CD4-positive, alpha-beta memory T cell (primary cell): ENCODE measurements at regions of chr20 and their contacts with region 1.

Region 1: DNA sequence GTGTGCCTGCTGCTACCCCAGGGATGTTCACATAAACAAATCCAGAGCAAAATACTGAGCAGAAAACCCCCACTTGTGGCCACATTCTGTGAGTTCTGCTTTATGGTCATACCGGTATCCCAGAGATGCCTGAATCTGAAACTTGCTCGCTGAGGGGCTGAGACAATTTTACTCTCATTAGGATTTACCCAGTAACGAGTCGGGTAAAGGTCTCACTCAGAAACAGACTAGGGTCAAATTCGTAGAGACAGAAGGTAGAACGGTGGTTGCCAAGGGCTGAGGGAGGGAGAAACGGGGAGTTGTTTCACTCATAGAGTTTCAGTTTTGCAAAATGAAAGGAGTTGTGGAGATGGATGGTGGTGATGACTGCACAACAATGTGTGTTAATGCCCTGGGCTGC is 45.4 kb upstream of the NKX2-2 start:
- DNase-seq: peak in 1 of 5 donors; percentile 24
- H3K4me3 ChIP-seq: no peak overlapping the region
- H3K4me3 Mint-ChIP-seq: peak overlapping the region; percentile 70 to 89 (median 82)
- H3K27ac ChIP-seq: no peak overlapping the region
- H3K27ac Mint-ChIP-seq: peak overlapping the region; percentile 33 to 91 (median 79)
- H3K4me1 ChIP-seq: peaks cover 55% of the 10 kb centered on the region
- H3K4me1 Mint-ChIP-seq: peaks cover 32 to 58% (median 52%) of the 10 kb centered on the region in 4 donors
- H3K27me3 ChIP-seq: no peaks in the 10 kb centered on the region
- H3K27me3 Mint-ChIP-seq: peaks cover 6 to 8% of the 10 kb centered on the region in 2 donors

Region 2: DNA sequence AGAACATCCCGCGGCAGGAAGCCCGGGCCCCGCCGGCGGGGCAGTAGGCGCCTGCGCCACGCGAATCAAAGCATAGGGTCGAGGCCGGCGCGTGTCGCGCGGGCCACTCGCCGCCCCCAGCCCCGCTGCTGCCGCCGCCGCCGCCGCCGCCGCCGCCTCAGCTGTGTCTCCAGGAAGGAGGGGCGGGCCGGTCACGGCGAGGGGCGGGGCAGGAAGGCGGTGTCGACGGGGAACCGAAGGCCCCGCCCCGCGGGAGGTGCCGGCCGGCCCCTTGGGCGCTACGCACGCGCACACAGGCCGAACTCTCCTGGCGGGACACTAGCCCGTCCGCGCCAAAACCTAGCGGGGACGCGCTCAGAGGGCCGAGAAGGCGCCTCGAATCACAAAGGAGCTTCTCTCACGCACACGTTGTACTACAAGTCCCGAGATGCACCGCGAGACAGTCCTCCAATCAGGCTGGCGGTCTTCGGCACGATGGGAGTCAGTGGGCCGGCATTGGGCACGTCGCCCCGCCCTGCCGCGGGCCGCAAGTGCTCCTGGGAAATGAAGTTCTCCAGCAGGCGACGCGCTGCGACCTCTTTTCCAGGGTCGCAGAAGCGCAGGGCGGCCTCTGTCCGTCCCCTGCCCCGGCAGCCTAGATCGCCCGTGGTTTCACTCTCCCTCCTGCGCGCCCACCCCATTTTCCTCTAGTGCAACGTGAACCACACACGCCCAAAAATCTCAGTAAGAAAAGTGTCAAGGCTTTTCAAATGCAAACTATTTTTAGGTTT is 846.6 kb before region 1 on chr20 and contains the start of gene RALGAPA2:
- CTCF ChIA-PET with region 1: no interaction called
- POLR2A ChIA-PET with region 1: no interaction called
- intact Hi-C with region 1: loop called (anchors 10 kb)
- DNase-seq: peak; percentile 94 to 96 (median 94)
- H3K4me3 ChIP-seq: peak within 1 kb of the TSS; percentile 42 to 79
- H3K4me3 Mint-ChIP-seq: peak within 1 kb of the TSS; percentile 91 to 97 (median 96)
- H3K27ac ChIP-seq: peak within 1 kb of the TSS; percentile 79
- H3K27ac Mint-ChIP-seq: peak within 1 kb of the TSS; percentile 90 to 99 (median 96)
- H3K4me1 ChIP-seq: peaks cover 17% of the 10 kb centered on the region
- H3K4me1 Mint-ChIP-seq: peaks cover 25 to 39% (median 29%) of the 10 kb centered on the region in 4 donors
- H3K27me3 ChIP-seq: no peaks in the 10 kb centered on the region
- H3K27me3 Mint-ChIP-seq: peaks cover 0 to 3% of the 10 kb centered on the region in 2 donors
- total RNA-seq, gene RALGAPA2: 33.6 to 36.3 TPM

Region 3: GRCh38 chr20:21514553-21515251 is 44.6 kb before region 1 on chr20:
- CTCF ChIA-PET with region 1: no interaction called
- POLR2A ChIA-PET with region 1: interaction called, 6 read pairs
- intact Hi-C with region 1: loop called (anchors 5 kb)
- DNase-seq: no peak
- H3K4me3 ChIP-seq: no peak overlapping the region
- H3K4me3 Mint-ChIP-seq: peak overlapping the region; percentile 52 to 83 (median 76)
- H3K27ac ChIP-seq: no peak overlapping the region
- H3K27ac Mint-ChIP-seq: peak overlapping the region in 1 of 7 donors; percentile 65
- H3K4me1 ChIP-seq: peaks cover 72% of the 10 kb centered on the region
- H3K4me1 Mint-ChIP-seq: peaks cover 26 to 81% (median 54%) of the 10 kb centered on the region in 4 donors
- H3K27me3 ChIP-seq: peaks cover 75% of the 10 kb centered on the region
- H3K27me3 Mint-ChIP-seq: peaks cover 62 to 66% of the 10 kb centered on the region in 2 donors

Region 4: GRCh38 chr20:21529863-21530262 is 29.4 kb before region 1 on chr20:
- CTCF ChIA-PET with region 1: interaction called, 24 read pairs
- POLR2A ChIA-PET with region 1: interaction called, 13 read pairs
- intact Hi-C with region 1: loop called (anchors 1 kb)
- DNase-seq: no peak
- H3K4me3 ChIP-seq: no peak overlapping the region
- H3K4me3 Mint-ChIP-seq: no peak overlapping the region
- H3K27ac ChIP-seq: no peak overlapping the region
- H3K27ac Mint-ChIP-seq: peak overlapping the region in 1 of 7 donors; percentile 49
- H3K4me1 ChIP-seq: no peaks in the 10 kb centered on the region
- H3K4me1 Mint-ChIP-seq: peaks cover 0 to 5% (median 3%) of the 10 kb centered on the region in 4 donors
- H3K27me3 ChIP-seq: peaks cover 13% of the 10 kb centered on the region
- H3K27me3 Mint-ChIP-seq: peaks cover 18 to 35% of the 10 kb centered on the region in 2 donors

Region 5: DNA sequence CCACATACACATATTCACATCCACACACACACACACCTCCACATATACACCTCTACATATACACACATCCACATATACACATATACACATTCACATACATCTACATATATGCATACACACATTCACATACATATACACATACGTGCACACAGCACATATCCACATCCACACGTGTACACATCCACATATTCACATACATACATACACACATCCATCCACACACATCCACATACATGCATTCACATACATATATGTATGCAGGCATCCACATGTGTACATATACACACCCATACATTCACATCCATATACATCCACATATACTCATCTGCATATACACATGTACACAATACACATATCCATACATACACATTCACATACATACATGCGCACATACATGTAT is 19.8 kb before region 1 on chr20:
- CTCF ChIA-PET with region 1: interaction called, 4 read pairs
- POLR2A ChIA-PET with region 1: interaction called, 13 read pairs
- intact Hi-C with region 1: loop called (anchors 2 kb)
- DNase-seq: no peak
- H3K4me3 ChIP-seq: no peak overlapping the region
- H3K4me3 Mint-ChIP-seq: no peak overlapping the region
- H3K27ac ChIP-seq: no peak overlapping the region
- H3K27ac Mint-ChIP-seq: no peak overlapping the region
- H3K4me1 ChIP-seq: no peaks in the 10 kb centered on the region
- H3K4me1 Mint-ChIP-seq: no peaks in the 10 kb centered on the region
- H3K27me3 ChIP-seq: no peaks in the 10 kb centered on the region
- H3K27me3 Mint-ChIP-seq: peaks cover 5 to 12% of the 10 kb centered on the region in 2 donors

Region 6: GRCh38 chr20:21548390-21549035 is 10.8 kb before region 1 on chr20:
- CTCF ChIA-PET with region 1: interaction called, 14 read pairs
- POLR2A ChIA-PET with region 1: interaction called, 90 read pairs
- intact Hi-C with region 1: loop called (anchors 1 kb)
- DNase-seq: peak; percentile 74 to 86 (median 80)
- H3K4me3 ChIP-seq: peak overlapping the region; percentile 10 to 32
- H3K4me3 Mint-ChIP-seq: peak overlapping the region; percentile 74 to 88 (median 80)
- H3K27ac ChIP-seq: peak overlapping the region; percentile 43
- H3K27ac Mint-ChIP-seq: peak overlapping the region; percentile 84 to 97 (median 95)
- H3K4me1 ChIP-seq: peaks cover 44% of the 10 kb centered on the region
- H3K4me1 Mint-ChIP-seq: peaks cover 22 to 41% (median 32%) of the 10 kb centered on the region in 4 donors
- H3K27me3 ChIP-seq: no peaks in the 10 kb centered on the region
- H3K27me3 Mint-ChIP-seq: no peaks in the 10 kb centered on the region

Region 7: DNA sequence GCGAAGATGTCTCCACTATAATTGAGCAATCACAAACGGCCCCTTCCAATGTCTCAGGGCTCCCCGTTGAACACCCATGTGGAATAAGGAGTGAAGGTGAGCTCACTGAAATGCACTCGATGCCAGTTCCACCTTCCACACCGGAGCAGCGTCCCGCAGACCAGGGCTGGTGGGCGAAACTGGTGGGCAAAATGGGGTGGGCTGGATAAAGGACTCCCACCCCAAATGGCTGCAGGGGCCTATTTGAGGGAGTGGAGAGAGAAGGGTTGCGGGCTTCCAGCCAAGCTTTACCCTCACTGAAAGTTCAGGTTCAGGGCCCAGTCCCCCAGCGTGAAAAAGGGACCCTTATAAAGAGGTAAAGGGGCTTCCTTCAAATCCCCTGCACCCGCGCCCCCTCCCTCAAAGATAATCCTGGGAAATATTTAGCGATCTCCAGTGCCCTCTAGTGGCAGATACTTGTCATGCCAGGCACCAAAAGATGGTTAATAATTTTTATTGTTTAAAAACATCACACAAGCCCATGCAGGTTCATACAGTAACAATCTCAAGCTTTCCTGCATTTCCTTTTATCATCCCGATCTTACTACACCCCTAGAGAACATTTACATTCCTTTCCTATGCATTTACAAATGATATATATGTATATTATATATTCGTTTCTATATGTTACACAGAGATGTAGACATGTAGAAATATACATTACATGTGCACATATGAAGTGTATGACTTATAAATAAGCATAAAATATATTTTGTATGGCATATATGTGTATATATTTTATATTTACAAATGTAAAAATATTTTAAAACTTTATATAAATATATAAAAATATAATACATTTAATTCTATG is 12.8 kb after region 1 on chr20:
- CTCF ChIA-PET with region 1: interaction called, 83 read pairs
- POLR2A ChIA-PET with region 1: interaction called, 20 read pairs
- intact Hi-C with region 1: loop called (anchors 1 kb)
- DNase-seq: peak in 2 of 5 donors; percentile 15 to 26
- H3K4me3 ChIP-seq: no peak overlapping the region
- H3K4me3 Mint-ChIP-seq: no peak overlapping the region
- H3K27ac ChIP-seq: no peak overlapping the region
- H3K27ac Mint-ChIP-seq: no peak overlapping the region
- H3K4me1 ChIP-seq: peaks cover 15% of the 10 kb centered on the region
- H3K4me1 Mint-ChIP-seq: peaks cover 2 to 13% (median 8%) of the 10 kb centered on the region in 4 donors
- H3K27me3 ChIP-seq: no peaks in the 10 kb centered on the region
- H3K27me3 Mint-ChIP-seq: peaks cover 1 to 10% of the 10 kb centered on the region in 2 donors